Psoas muscle (tissue), 8 donors: ENCODE measurements at regions of chr1 and their contacts with region 1.

Region 1: GRCh38 chr1:177780096-177780700 is 189.7 kb downstream of the SEC16B start:
- DNase-seq: no peak
- ATAC-seq: peak; percentile 84 to 98 (median 88)
- H3K4me3 ChIP-seq: no peak overlapping the region
- H3K27ac ChIP-seq: no peak overlapping the region
- H3K4me1 ChIP-seq: no peaks in the 10 kb centered on the region
- H3K27me3 ChIP-seq: no peaks in the 10 kb centered on the region
- CTCF ChIP-seq: peak; percentile 60

Region 2: GRCh38 chr1:176897350-176898236 is 882.6 kb before region 1 on chr1:
- intact Hi-C with region 1: loop called in 1 of 2 experiments (anchors 10 kb)
- DNase-seq: peak; percentile 46 to 72
- ATAC-seq: peak; percentile 67 to 86 (median 73)
- H3K4me3 ChIP-seq: peak overlapping the region; percentile 45
- H3K27ac ChIP-seq: no peak overlapping the region
- H3K4me1 ChIP-seq: peaks cover 4% of the 10 kb centered on the region
- H3K27me3 ChIP-seq: peaks cover 0 to 24% (median 7%) of the 10 kb centered on the region in 3 donors
- CTCF ChIP-seq: peak; percentile 63

Region 3: DNA sequence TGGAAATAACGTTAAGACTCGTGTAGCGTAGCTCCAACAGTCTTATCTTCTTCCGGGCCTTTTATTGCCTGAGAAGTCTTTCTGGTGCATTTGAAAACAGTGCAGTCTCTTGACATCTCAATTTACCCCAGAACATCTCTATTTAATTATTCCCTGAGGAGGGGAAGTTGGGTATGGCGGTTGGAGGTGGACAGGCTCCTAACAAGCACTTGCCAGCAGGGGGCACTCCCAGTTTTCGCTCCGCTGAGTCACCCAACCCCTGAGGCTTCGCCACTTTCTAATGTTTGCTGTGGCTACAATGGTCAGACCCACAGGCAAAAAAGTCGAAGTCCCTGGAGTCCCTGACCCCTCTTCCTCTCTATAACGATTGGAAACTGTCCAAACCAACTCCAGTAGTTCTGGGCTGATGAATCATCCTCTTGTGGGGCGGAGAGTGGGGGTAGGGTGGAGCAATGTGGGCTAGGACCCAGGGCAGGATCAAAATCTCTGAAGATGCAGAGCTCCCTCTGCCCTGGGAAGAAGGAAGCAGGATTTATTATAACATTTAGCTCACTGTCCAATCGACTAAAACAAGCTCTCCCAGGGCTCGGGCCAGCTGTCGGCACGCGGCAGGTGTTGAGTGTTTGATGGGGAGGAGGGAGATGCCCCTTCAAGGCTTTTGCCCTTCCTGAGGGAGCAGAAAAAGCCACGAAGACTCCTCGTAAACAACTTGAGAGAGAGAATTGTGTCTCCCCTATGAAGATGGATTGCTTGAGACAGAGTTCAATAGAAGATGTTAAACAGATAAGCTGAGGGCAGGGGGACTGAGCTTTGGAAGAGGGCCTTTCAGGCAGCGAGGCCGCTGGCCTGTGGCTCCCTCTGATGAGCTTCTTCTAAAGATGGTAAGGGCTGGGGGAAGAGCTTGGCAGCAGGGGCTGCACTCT is 523.8 kb before region 1 on chr1:
- intact Hi-C with region 1: loop called (anchors 5 kb)
- DNase-seq: peak; percentile 57 to 81
- ATAC-seq: peak; percentile 89 to 98 (median 92)
- H3K4me3 ChIP-seq: no peak overlapping the region
- H3K27ac ChIP-seq: no peak overlapping the region
- H3K4me1 ChIP-seq: peaks cover 5% of the 10 kb centered on the region
- H3K27me3 ChIP-seq: no peaks in the 10 kb centered on the region
- CTCF ChIP-seq: peak; percentile 79

Region 4: GRCh38 chr1:177432897-177433296 is 347.3 kb before region 1 on chr1:
- intact Hi-C with region 1: loop called (anchors 5 kb)
- DNase-seq: no peak
- ATAC-seq: no peak
- H3K4me3 ChIP-seq: no peak overlapping the region
- H3K27ac ChIP-seq: no peak overlapping the region
- H3K4me1 ChIP-seq: no peaks in the 10 kb centered on the region
- H3K27me3 ChIP-seq: peaks cover 0 to 2% (median 2%) of the 10 kb centered on the region in 3 donors
- CTCF ChIP-seq: no peak

Region 5: DNA sequence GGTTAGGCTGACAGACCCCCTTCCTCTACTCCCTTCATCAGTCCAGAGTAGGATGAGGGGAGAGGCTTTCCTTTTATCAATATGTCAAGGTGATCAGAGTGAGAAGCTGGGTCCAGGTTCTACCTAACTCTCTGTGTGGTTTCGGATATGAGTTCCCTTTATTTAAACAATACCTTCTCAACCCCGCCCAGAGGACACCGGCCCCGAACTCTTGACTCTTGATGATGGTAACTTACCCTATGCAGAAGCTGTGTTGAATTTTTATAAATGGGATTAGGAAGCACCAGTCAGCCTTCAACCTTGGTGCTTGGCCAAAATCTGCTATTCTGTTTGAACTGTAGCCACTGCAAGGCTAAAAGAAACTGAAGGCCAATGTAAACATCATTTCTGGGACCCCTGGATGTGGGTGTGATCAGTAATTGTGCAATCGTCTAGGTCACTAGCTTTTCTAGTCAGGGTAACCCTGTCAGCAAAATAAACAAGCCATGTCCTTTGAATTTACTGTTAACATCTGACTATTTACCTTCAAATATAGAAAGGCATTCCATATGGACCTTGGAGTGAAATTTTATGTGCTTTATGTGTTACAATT is 208.6 kb before region 1 on chr1:
- intact Hi-C with region 1: loop called in 1 of 2 experiments (anchors 5 kb)
- DNase-seq: no peak
- ATAC-seq: no peak
- H3K4me3 ChIP-seq: no peak overlapping the region
- H3K27ac ChIP-seq: no peak overlapping the region
- H3K4me1 ChIP-seq: no peaks in the 10 kb centered on the region
- H3K27me3 ChIP-seq: no peaks in the 10 kb centered on the region
- CTCF ChIP-seq: no peak

Region 6: DNA sequence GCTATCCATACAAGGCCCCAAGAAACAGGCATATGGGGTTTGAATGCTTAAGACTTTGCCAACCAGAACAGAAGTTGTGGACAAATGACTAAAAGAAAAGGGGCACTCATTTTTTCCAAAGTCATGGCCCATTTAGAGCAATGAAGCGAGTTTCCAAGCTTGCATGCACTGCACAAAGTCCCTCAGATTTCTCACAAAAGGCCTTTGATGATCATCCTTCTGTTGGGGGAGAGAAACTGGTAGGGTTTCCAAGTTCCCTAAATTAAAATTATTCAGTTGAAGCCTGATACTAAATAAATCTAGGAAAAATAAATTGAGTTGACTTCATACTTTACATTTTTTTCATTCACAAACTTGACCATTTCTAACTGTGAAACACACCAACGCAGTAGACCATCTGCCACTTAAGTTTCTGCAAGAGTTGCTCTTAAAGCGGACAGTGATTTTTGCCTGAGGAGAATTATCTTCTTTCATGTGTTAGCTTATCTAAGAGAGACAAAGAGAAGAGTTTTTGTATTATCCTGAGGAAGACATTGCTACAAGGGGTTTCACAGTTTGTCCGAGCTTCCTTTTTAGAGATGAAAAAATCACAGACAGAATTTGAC is 50.4 kb after region 1 on chr1:
- intact Hi-C with region 1: no loop called
- DNase-seq: no peak
- ATAC-seq: no peak
- H3K4me3 ChIP-seq: no peak overlapping the region
- H3K27ac ChIP-seq: no peak overlapping the region
- H3K4me1 ChIP-seq: no peaks in the 10 kb centered on the region
- H3K27me3 ChIP-seq: no peaks in the 10 kb centered on the region
- CTCF ChIP-seq: no peak